ENCODE measurements at regions of chr1 and their contacts with region 1.

Region 1: GRCh38 chr1:161374373-161374772 is 6.7 kb upstream of the CFAP126 start:
- DNase-seq: no peak
- H3K4me3 ChIP-seq: no peak overlapping the region
- H3K27ac ChIP-seq: no peak overlapping the region
- H3K4me1 ChIP-seq: no peaks in the 10 kb centered on the region
- H3K27me3 ChIP-seq: no peaks in the 10 kb centered on the region
- CTCF ChIP-seq: no peak
- EP300 ChIP-seq: no peak
- POLR2A ChIP-seq: no peak

Region 2: DNA sequence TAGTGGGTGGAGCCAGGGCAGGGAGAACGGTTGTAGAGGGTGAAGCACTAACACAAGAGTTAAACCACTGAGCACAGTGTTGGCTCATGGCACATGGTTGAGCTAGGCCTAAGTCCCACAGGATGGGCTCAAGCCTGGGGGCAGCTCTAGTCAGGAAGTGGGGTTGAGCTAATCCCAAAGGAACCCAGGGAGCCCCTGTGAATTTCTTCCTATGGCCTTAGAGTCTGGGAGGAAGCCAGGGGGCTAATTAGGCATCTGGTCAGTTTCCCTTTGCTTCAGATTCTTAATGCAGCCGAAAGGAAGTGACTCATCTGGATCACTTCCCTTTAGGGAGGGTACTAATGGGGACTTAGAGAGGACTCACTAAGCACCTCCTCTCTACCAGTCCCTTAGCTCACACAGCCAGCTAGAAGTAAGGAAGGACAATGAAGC is 1484.5 kb before region 1 on chr1:
- in situ Hi-C with region 1: no loop called
- intact Hi-C with region 1: no loop called
- DNase-seq: no peak
- H3K4me3 ChIP-seq: no peak overlapping the region
- H3K27ac ChIP-seq: peak overlapping the region; percentile 5 to 34 (median 16)
- H3K4me1 ChIP-seq: peaks cover 0 to 11% (median 4%) of the 10 kb centered on the region in 4 donors
- H3K27me3 ChIP-seq: no peaks in the 10 kb centered on the region
- CTCF ChIP-seq: no peak
- EP300 ChIP-seq: no peak
- POLR2A ChIP-seq: no peak

Region 3: DNA sequence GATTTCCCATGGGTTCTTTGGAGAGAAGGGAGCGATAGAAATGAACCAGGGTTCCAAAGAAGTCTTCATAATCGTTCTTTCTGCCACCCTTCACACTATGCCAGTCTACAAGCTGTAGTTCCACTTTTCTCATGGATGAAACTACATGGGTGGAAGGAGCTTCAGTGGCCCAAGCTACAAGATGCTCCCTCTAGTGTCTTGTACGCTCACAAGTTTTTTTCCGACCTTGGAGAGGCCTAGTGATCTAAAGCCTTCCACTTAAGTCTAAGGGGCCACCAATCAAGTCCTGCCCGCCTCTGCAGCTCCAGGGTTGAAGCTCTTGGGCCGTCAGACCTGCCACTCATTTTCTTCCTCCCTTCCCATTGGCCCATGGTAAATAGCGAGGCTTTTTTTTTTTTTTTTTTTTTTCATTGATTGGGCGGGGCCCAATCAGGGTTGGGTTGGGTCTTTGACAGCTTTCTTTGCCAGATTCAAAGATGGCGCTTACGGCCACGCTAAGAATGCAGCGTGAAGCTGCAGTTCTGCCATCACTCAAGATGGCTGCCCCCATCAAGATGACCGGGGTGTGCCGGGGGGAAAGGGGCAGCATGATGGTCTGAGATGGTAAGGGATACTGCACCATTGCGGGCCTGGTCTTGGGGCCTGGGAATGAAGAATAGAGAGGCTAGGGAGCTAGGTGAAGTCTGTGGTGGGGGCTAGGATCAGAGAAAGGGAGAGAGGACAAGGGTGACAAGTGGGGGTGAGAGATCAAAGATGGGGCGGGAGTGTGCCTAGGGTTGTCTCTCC is 148.6 kb before region 1 on chr1 and contains the start of gene TOMM40L:
- in situ Hi-C with region 1: loop called in 3 of 4 experiments (anchors 10 to 25 kb)
- intact Hi-C with region 1: no loop called
- DNase-seq: peak; percentile 90
- H3K4me3 ChIP-seq: peak within 1 kb of the TSS; percentile 52 to 72 (median 61)
- H3K27ac ChIP-seq: peak within 1 kb of the TSS; percentile 70 to 87 (median 82)
- H3K4me1 ChIP-seq: peaks cover 14 to 23% (median 20%) of the 10 kb centered on the region in 4 donors
- H3K27me3 ChIP-seq: no peaks in the 10 kb centered on the region
- CTCF ChIP-seq: peak; percentile 39 to 73 (median 51)
- EP300 ChIP-seq: no peak
- POLR2A ChIP-seq: peak; percentile 2
- total RNA-seq, gene TOMM40L: 5.8 to 21.4 (median 12.6) TPM

Region 4: DNA sequence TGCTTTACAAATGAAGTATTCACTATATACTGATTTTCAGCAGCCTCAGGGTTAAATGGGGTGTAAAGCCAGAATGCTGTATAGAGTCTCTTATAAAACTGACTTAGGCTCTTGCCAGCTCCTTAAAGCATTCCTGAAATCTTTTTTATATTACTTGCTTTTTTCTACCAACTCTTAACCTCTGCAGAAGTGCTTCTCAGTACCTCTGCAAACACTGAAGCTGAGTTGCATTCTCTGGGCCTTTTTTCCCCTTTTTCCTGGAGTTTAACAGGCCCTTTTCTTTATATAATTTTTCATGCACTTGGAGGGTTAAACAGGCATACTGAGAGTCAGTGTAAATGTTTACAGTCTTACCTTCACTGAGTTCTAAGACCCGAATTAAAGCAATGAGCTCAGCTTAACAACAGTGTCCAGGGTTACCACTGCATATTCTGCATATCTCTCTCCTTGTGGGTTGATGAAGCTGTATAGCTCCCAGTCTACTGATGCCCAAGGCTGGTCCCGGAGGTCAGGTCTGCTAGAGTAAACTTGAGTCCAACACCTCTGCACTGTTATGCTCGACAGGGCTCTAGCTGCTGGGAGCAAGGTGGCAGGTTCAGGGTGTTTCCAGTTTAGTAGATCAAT is 34.2 kb after region 1 on chr1:
- in situ Hi-C with region 1: no loop called
- intact Hi-C with region 1: no loop called
- DNase-seq: no peak
- H3K4me3 ChIP-seq: no peak overlapping the region
- H3K27ac ChIP-seq: no peak overlapping the region
- H3K4me1 ChIP-seq: peaks cover 0 to 12% (median 0%) of the 10 kb centered on the region in 4 donors
- H3K27me3 ChIP-seq: no peaks in the 10 kb centered on the region
- CTCF ChIP-seq: no peak
- EP300 ChIP-seq: no peak
- POLR2A ChIP-seq: no peak

Measured in transverse colon (tissue), 4 donors.